Caki2 (cell line): ENCODE measurements at regions of chr6 and their contacts with region 1.

Region 1: GRCh38 chr6:28929887-28930620 is 6.3 kb upstream of the TRIM27 start:
- DNase-seq: no peak

Region 2: DNA sequence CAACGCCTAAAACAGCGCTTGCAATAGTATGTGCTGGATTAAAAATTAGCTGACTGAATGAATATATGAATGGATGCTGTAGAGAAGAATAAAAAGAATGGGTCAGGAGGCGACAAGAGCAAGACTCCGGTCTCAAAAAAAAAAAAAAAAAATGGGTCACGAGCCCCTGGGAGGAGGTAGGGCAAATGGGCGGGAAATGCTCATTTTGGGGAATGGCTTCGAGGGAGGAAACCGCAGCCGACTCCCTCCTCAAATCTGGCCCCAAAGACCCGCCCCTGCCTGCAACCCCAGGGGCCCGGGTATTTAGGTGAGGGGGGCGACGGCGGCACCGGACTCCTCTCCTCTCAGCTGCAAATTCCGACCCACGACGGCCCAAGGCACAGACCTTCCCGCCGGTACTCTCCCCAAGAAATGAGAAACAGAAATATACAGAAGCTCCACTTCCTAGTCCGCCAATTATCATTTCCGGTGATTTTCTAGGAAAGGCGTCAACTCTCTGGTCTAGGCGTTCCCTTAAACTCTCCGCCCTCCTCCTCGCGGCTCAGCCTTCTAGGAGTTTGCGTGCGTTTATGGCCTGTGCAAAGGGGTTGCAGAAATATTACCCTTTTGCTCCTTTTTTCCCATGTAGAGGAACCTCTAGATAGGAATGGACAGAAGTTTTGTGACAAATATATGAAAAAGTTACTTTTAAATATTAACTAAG is 75.3 kb after region 1 on chr6 and contains the start of gene ZNF311:
- in situ Hi-C with region 1: loop called (anchors 10 kb)
- DNase-seq: peak; percentile 78
- total RNA-seq, gene ZNF311: 4.1 and 5.9 TPM in 2 replicates